CD4-positive, alpha-beta memory T cell (primary cell): ENCODE measurements at regions of chr5 and their contacts with region 1.

Region 1: GRCh38 chr5:79133657-79134451 is 22.2 kb downstream of the BHMT start:
- DNase-seq: peak; percentile 43 to 58 (median 50)
- H3K4me3 ChIP-seq: peak overlapping the region in 1 of 2 donors; percentile 26
- H3K4me3 Mint-ChIP-seq: peak overlapping the region in 7 of 8 donors; percentile 29 to 83 (median 70)
- H3K27ac ChIP-seq: no peak overlapping the region
- H3K27ac Mint-ChIP-seq: peak overlapping the region in 2 of 7 donors; percentile 45 to 69
- H3K4me1 ChIP-seq: peaks cover 13% of the 10 kb centered on the region
- H3K4me1 Mint-ChIP-seq: peaks cover 7 to 11% (median 10%) of the 10 kb centered on the region in 4 donors
- H3K27me3 ChIP-seq: no peaks in the 10 kb centered on the region
- H3K27me3 Mint-ChIP-seq: peaks cover 4 to 7% of the 10 kb centered on the region in 2 donors

Region 2: DNA sequence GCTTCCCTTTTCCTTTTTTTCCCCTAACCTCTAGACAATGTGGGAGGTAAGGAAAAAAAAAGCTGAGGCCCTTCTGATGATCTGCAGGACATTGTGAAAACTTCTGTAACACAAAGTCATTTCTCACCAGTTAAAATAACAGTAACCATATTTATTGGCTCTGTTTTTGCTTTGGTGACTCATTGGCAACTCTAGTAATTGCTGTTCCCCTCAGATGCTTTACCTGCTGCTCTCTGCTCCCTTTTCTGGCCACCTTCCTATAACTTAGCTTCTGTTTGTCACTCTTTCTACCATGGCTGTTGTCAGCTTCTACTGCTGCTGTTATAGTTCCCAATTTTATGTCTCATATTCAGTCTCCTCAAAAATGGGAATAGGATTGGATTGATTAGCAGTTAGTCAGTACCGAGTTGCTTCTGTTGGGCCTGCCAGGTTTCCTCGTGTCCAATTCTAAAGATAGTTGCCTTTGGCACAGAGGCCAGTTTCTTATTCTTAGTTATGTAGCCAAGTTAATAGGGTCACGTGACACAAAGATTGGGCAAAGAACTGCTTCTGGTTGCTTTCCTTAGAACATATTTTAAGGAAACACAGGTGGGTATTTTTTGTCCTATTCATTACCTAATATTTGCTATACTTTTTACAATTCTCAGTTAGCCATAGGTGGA is 756.7 kb before region 1 on chr5:
- CTCF ChIA-PET with region 1: no interaction called
- POLR2A ChIA-PET with region 1: no interaction called
- intact Hi-C with region 1: no loop called
- DNase-seq: no peak
- H3K4me3 ChIP-seq: no peak overlapping the region
- H3K4me3 Mint-ChIP-seq: no peak overlapping the region
- H3K27ac ChIP-seq: no peak overlapping the region
- H3K27ac Mint-ChIP-seq: peak overlapping the region in 1 of 7 donors; percentile 32
- H3K4me1 ChIP-seq: peaks cover 4% of the 10 kb centered on the region
- H3K4me1 Mint-ChIP-seq: peaks cover 24 to 38% (median 29%) of the 10 kb centered on the region in 4 donors
- H3K27me3 ChIP-seq: no peaks in the 10 kb centered on the region
- H3K27me3 Mint-ChIP-seq: no peaks in the 10 kb centered on the region

Region 3: GRCh38 chr5:78533356-78533755 is 600.5 kb before region 1 on chr5:
- CTCF ChIA-PET with region 1: no interaction called
- POLR2A ChIA-PET with region 1: no interaction called
- intact Hi-C with region 1: no loop called
- DNase-seq: no peak
- H3K4me3 ChIP-seq: no peak overlapping the region
- H3K4me3 Mint-ChIP-seq: no peak overlapping the region
- H3K27ac ChIP-seq: no peak overlapping the region
- H3K27ac Mint-ChIP-seq: no peak overlapping the region
- H3K4me1 ChIP-seq: no peaks in the 10 kb centered on the region
- H3K4me1 Mint-ChIP-seq: peaks cover 0 to under 1% (median 0%) of the 10 kb centered on the region in 4 donors
- H3K27me3 ChIP-seq: no peaks in the 10 kb centered on the region
- H3K27me3 Mint-ChIP-seq: peaks cover 1 to 8% of the 10 kb centered on the region in 2 donors

Region 4: DNA sequence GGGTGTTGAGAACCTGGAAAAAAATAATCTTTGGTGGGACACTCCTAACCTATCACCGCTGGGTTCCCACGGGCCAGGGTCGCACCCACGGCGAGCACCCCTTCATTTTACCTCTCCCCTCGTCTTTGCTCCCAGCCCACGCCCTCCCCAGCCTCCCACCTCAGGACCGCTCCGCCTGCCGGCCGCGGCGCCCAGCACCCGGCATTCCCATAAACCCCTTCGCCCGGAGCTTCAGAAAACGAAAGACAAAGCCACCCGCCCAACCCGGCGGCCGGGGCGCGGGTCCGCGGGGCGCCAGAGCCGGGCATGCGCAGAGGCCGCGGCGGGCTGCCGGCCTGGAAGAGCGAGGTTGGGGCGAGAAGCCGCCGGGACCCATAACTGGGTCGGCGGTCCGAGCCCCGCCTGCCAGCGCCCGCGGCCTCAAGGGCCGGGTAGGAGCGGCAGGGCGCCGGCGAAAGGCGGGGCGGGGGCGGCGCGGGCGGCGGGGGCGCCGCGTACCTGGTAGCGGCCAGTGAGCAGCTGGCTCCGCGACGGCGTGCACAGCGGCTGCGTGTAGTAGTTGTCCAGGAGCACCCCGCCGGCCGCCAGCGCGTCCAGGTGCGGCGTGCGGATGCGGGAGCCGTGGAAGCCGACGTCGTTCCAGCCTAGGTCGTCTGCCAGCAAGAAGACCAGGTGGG is 149.3 kb before region 1 on chr5:
- CTCF ChIA-PET with region 1: interaction called, 25 read pairs
- POLR2A ChIA-PET with region 1: interaction called, 5 read pairs
- intact Hi-C with region 1: loop called (anchors 1 kb)
- DNase-seq: peak; percentile 76 to 85 (median 80)
- H3K4me3 ChIP-seq: peak overlapping the region; percentile 34 to 70
- H3K4me3 Mint-ChIP-seq: peak overlapping the region; percentile 90 to 94 (median 92)
- H3K27ac ChIP-seq: peak overlapping the region; percentile 60
- H3K27ac Mint-ChIP-seq: peak overlapping the region; percentile 87 to 95 (median 93)
- H3K4me1 ChIP-seq: peaks cover 17% of the 10 kb centered on the region
- H3K4me1 Mint-ChIP-seq: peaks cover 18 to 31% (median 23%) of the 10 kb centered on the region in 4 donors
- H3K27me3 ChIP-seq: no peaks in the 10 kb centered on the region
- H3K27me3 Mint-ChIP-seq: no peaks in the 10 kb centered on the region

Region 5: GRCh38 chr5:79109527-79110492 is 24.0 kb before region 1 on chr5:
- CTCF ChIA-PET with region 1: interaction called, 14 read pairs
- POLR2A ChIA-PET with region 1: no interaction called
- intact Hi-C with region 1: no loop called
- DNase-seq: peak in 4 of 5 donors; percentile 15 to 28 (median 21)
- H3K4me3 ChIP-seq: no peak overlapping the region
- H3K4me3 Mint-ChIP-seq: no peak overlapping the region
- H3K27ac ChIP-seq: no peak overlapping the region
- H3K27ac Mint-ChIP-seq: no peak overlapping the region
- H3K4me1 ChIP-seq: no peaks in the 10 kb centered on the region
- H3K4me1 Mint-ChIP-seq: peaks cover 0 to 5% (median 0%) of the 10 kb centered on the region in 4 donors
- H3K27me3 ChIP-seq: peaks cover 6% of the 10 kb centered on the region
- H3K27me3 Mint-ChIP-seq: peaks cover 44 to 45% of the 10 kb centered on the region in 2 donors

Region 6: GRCh38 chr5:79157305-79157704 is 23.5 kb after region 1 on chr5:
- CTCF ChIA-PET with region 1: interaction called, 15 read pairs
- POLR2A ChIA-PET with region 1: no interaction called
- intact Hi-C with region 1: no loop called
- DNase-seq: no peak
- H3K4me3 ChIP-seq: no peak overlapping the region
- H3K4me3 Mint-ChIP-seq: no peak overlapping the region
- H3K27ac ChIP-seq: no peak overlapping the region
- H3K27ac Mint-ChIP-seq: no peak overlapping the region
- H3K4me1 ChIP-seq: no peaks in the 10 kb centered on the region
- H3K4me1 Mint-ChIP-seq: no peaks in the 10 kb centered on the region
- H3K27me3 ChIP-seq: no peaks in the 10 kb centered on the region
- H3K27me3 Mint-ChIP-seq: peaks cover 2 to 5% of the 10 kb centered on the region in 2 donors

Region 7: GRCh38 chr5:79235634-79236363 is 101.9 kb after region 1 on chr5 and contains the start of gene JMY:
- CTCF ChIA-PET with region 1: interaction called, 10 read pairs
- POLR2A ChIA-PET with region 1: interaction called, 4 read pairs
- intact Hi-C with region 1: loop called (anchors 1 kb)
- DNase-seq: peak; percentile 83 to 90 (median 86)
- H3K4me3 ChIP-seq: peak within 1 kb of the TSS; percentile 83 to 93
- H3K4me3 Mint-ChIP-seq: peak within 1 kb of the TSS; percentile 95 to 99 (median 96)
- H3K27ac ChIP-seq: peak within 1 kb of the TSS; percentile 96
- H3K27ac Mint-ChIP-seq: peak within 1 kb of the TSS; percentile 96 to 99 (median 98)
- H3K4me1 ChIP-seq: peaks cover 40% of the 10 kb centered on the region
- H3K4me1 Mint-ChIP-seq: peaks cover 15 to 33% (median 25%) of the 10 kb centered on the region in 4 donors
- H3K27me3 ChIP-seq: no peaks in the 10 kb centered on the region
- H3K27me3 Mint-ChIP-seq: peaks cover 0 to 2% of the 10 kb centered on the region in 2 donors
- total RNA-seq, gene JMY: 25.7 to 29.7 TPM

Region 8: GRCh38 chr5:79464695-79465332 is 331.0 kb after region 1 on chr5:
- CTCF ChIA-PET with region 1: interaction called, 67 read pairs
- POLR2A ChIA-PET with region 1: no interaction called
- intact Hi-C with region 1: loop called (anchors 1 kb)
- DNase-seq: peak in 4 of 5 donors; percentile 14 to 33 (median 20)
- H3K4me3 ChIP-seq: no peak overlapping the region
- H3K4me3 Mint-ChIP-seq: no peak overlapping the region
- H3K27ac ChIP-seq: no peak overlapping the region
- H3K27ac Mint-ChIP-seq: peak overlapping the region in 1 of 7 donors; percentile 1
- H3K4me1 ChIP-seq: no peaks in the 10 kb centered on the region
- H3K4me1 Mint-ChIP-seq: peaks cover 0 to 2% (median 0%) of the 10 kb centered on the region in 4 donors
- H3K27me3 ChIP-seq: no peaks in the 10 kb centered on the region
- H3K27me3 Mint-ChIP-seq: peaks cover 0 to 7% of the 10 kb centered on the region in 2 donors

Region 9: DNA sequence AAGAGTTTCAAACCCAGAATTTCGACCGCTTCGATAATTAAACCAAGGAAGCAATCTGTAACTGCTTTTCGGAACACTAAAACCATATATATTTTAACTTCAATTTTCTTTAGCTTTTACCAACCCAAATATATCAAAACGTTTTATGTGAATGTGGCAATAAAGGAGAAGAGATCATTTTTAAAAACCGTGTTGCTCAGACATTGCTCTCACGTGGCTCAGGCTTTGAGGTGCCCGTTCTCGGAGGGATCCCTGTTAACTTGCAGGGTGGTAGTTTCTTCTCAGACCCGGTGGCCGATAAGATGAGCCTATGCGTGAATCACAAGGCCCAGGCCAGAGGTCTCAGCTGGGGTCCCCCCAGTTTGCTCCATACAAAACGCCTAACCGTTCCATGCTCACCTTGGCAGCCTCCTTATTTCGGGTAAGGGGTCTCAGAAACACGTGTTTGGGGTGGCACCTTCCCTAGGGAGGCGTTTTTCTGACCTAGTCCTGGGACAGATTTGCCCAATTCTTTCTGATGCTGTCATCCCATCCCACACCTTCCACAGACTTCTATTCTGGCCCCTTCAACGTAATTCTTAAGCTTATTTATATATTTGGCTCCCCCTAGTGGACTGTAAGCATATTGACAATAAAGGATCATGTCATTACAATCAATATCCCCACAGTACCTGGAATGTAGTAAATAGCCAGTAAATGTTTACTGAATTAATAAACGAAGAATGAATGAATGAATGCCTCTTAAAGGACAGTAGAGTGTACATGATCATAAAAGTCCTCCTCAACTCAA is 949.4 kb after region 1 on chr5:
- CTCF ChIA-PET with region 1: interaction called, 3 read pairs
- POLR2A ChIA-PET with region 1: no interaction called
- intact Hi-C with region 1: loop called (anchors 10 kb)
- DNase-seq: peak in 4 of 5 donors; percentile 50 to 58 (median 54)
- H3K4me3 ChIP-seq: peak overlapping the region in 1 of 2 donors; percentile 34
- H3K4me3 Mint-ChIP-seq: peak overlapping the region; percentile 73 to 88 (median 86)
- H3K27ac ChIP-seq: no peak overlapping the region
- H3K27ac Mint-ChIP-seq: peak overlapping the region; percentile 16 to 92 (median 81)
- H3K4me1 ChIP-seq: peaks cover 11% of the 10 kb centered on the region
- H3K4me1 Mint-ChIP-seq: peaks cover 5 to 15% (median 7%) of the 10 kb centered on the region in 4 donors
- H3K27me3 ChIP-seq: no peaks in the 10 kb centered on the region
- H3K27me3 Mint-ChIP-seq: no peaks in the 10 kb centered on the region